Panc1 (cell line): ENCODE measurements at regions of chr4 and their contacts with region 1.

Region 1: DNA sequence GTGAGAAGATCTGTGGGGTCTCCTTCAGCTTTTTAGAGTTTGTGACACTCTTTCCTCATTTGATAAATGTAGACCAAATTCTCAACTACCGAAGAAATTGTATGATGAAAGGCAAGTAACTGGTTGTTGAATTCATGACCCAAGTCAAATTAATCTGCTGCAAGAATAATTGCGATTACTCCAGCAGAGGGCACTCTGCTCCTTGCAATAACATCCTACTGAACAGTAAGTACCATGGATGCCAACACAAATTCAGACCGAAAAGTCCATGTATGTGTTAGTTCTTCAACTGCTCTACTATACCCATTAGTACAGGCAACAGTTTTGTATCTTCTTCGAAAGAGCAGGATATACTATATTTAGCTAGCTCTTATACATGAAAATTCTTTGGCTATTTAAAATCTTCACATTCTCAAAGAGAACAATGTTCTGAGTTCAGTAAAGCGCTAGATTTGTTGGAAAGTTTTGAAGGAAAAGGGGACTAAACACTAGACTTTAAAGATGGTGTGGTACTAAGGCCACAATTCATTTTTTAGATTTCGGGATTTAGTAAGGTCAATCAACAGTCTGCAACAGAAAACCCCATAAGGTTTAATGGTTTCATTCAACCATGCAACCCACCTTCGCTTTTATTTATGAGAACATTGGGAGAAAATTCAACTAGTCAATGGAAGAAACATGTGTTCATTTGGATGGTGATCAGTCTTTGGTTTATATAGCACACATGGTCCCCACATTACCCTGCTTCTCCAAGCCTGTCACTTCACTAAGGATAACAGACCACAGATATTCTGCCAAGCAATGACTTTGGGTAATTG is 105.4 kb upstream of the TBC1D9 start:
- DNase-seq: peak; percentile 53
- ATAC-seq: peak; percentile 70
- H3K4me3 ChIP-seq: no peak overlapping the region
- H3K27ac ChIP-seq: no peak overlapping the region
- H3K4me1 ChIP-seq: no peaks in the 10 kb centered on the region
- H3K27me3 ChIP-seq: no peaks in the 10 kb centered on the region; the same call in 1 of the 2 replicates
- CTCF ChIP-seq: peak; percentile 65

Region 2: GRCh38 chr4:140372751-140373327 is 488.7 kb before region 1 on chr4:
- CTCF ChIA-PET with region 1: no interaction called
- POLR2A ChIA-PET with region 1: no interaction called
- in situ Hi-C with region 1: no loop called
- intact Hi-C with region 1: no loop called
- DNase-seq: no peak
- ATAC-seq: peak; percentile 57
- H3K4me3 ChIP-seq: peak overlapping the region; percentile 92 to 93
- H3K27ac ChIP-seq: peak overlapping the region; percentile 88
- H3K4me1 ChIP-seq: peaks cover 13% of the 10 kb centered on the region
- H3K27me3 ChIP-seq: no peaks in the 10 kb centered on the region
- CTCF ChIP-seq: no peak

Region 3: GRCh38 chr4:140884431-140885058 is 23.0 kb after region 1 on chr4:
- CTCF ChIA-PET with region 1: interaction called, 3 read pairs
- POLR2A ChIA-PET with region 1: interaction called, 16 read pairs
- in situ Hi-C with region 1: no loop called
- intact Hi-C with region 1: loop called (anchors 1 kb)
- DNase-seq: peak; percentile 45
- ATAC-seq: peak; percentile 81; the same call in 1 of the 2 replicates
- H3K4me3 ChIP-seq: no peak overlapping the region
- H3K27ac ChIP-seq: no peak overlapping the region
- H3K4me1 ChIP-seq: no peaks in the 10 kb centered on the region
- H3K27me3 ChIP-seq: no peaks in the 10 kb centered on the region
- CTCF ChIP-seq: peak; percentile 80

Region 4: DNA sequence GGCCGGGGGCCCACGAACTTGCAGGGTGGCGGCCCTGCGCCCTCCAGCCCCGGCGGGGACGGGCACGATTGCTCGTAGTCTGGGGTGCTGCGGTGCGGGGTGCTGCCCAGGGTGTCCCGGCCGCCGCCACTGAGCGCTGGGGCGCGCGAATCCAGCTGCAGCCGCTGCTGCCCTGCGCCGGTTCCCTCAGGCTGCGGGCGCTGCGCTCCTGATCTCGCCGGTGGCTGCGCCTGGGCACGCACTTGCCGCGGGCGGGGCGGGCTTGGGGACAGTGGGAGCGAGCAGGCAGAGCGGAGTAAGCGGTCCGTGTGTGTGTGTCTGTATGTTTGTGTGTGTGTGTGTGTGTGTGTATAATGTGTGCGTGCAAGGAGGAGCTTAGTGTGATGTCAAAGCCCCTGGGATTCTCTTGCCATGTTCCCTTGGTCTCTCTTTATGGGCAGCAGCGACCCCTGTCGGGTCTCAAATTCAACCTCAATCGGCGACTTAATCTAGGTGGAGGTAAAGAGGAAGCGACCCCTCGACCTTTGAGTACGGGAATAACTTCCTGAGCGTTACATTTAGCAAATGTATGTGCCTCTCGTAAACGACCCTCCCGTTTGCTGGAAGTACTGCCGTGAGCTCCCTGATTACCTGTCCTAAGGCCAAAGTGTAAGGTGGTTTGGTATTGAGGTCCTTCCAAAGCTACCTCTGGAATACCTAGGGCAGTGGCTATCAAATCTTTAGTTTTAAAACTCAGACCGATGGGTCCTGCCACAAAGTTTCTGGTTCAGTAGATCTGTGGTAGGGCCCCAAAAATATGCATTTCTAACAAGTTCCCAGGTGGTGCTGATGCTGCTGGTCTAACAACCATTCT is 271.8 kb after region 1 on chr4 and contains the start of gene RNF150:
- CTCF ChIA-PET with region 1: no interaction called
- POLR2A ChIA-PET with region 1: no interaction called
- in situ Hi-C with region 1: no loop called
- intact Hi-C with region 1: loop called (anchors 2 kb)
- DNase-seq: peak; percentile 2
- ATAC-seq: peak; percentile 88
- H3K4me3 ChIP-seq: peak within 1 kb of the TSS; percentile 43 to 52
- H3K27ac ChIP-seq: no peak within 1 kb of the TSS
- H3K4me1 ChIP-seq: no peaks in the 10 kb centered on the region
- H3K27me3 ChIP-seq: peaks cover 2% of the 10 kb centered on the region; the same call in 1 of the 2 replicates
- CTCF ChIP-seq: peak; percentile 78
- total RNA-seq, gene RNF150: 1.3 TPM